Astrocyte of the cerebellum (primary cell): ENCODE measurements at regions of chr3 and their contacts with region 1.

Region 1: DNA sequence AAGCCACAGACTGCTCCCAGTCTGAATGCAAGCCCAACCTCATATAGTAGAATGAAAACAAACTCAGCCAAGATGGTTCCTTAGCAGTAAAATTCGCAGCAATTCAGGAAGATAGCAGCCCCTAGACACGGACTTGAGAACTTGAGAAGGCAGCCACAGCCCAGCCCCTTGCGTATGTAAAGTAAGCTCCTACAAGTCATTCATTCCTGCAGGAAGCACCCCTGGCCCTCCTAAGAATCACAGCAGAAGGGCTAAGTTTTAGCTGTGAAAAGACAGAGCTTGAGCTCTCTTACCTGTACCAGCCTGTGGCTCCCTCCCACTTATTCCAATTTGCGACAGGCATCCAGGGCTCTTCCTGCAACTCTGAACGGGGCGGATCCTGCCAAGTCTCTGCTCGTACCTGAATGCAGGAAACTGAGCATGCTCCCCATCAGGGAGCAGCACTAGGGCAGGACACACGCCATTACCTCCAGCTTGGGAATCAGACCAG is 136.4 kb downstream of the MAGI1 start:
- DNase-seq: no peak
- H3K4me3 ChIP-seq: no peak overlapping the region
- CTCF ChIP-seq: no peak

Region 2: GRCh38 chr3:65831733-65832425 is 70.5 kb before region 1 on chr3:
- in situ Hi-C with region 1: loop called (anchors 5 kb)
- DNase-seq: no peak
- H3K4me3 ChIP-seq: no peak overlapping the region
- CTCF ChIP-seq: no peak

Region 3: DNA sequence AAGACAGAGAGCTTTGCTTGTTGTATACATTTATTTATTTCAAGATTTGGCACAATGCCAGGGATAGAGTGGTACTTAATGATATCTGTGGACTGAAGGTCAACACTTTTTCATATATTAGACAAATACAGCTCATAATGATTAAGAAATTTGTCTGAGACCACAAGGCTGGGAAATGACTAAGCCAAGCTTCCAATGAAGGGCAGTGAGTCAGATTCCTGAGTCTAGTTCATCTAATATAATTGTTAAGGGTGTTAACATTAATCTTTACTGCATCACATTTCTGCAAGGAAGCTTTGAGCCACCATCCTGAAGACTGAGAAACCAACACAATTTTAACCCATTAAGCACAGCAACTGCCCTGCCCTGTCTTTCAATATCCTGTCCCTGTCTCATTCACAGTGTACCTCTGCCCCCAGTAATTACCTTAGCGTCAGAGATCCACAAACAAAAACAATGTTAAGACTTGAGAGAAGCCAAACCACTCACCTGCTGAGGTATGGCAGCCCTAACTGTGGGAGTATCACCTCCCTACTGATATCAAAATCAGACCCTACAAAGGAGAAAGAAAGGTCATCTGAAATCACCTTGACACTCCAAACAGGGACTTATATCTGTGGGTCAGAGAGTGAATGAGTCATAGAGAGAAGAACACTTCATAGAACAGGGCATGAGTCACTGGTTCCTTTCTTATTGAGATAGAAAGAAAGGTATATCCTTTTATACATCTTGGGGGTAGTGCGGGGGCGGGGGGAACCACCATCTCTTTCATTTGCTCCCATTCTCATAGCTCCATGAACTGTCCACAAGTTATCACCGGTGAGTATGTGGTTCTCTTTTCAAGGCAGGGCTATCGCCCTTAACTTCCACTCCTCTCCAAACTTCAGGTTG is 61.7 kb after region 1 on chr3:
- in situ Hi-C with region 1: loop called (anchors 5 kb)
- DNase-seq: peak; percentile 76
- H3K4me3 ChIP-seq: no peak overlapping the region
- CTCF ChIP-seq: no peak